CD4-positive, alpha-beta memory T cell (primary cell): ENCODE measurements at regions of chr20 and their contacts with region 1.

Region 1: GRCh38 chr20:32779500-32780211 is 17.5 kb downstream of the DNMT3B start:
- DNase-seq: no peak
- H3K4me3 ChIP-seq: no peak overlapping the region
- H3K4me3 Mint-ChIP-seq: no peak overlapping the region
- H3K27ac ChIP-seq: no peak overlapping the region
- H3K27ac Mint-ChIP-seq: no peak overlapping the region
- H3K4me1 ChIP-seq: no peaks in the 10 kb centered on the region
- H3K4me1 Mint-ChIP-seq: peaks cover 0 to 4% (median 3%) of the 10 kb centered on the region in 4 donors
- H3K27me3 ChIP-seq: no peaks in the 10 kb centered on the region
- H3K27me3 Mint-ChIP-seq: no peaks in the 10 kb centered on the region

Region 2: DNA sequence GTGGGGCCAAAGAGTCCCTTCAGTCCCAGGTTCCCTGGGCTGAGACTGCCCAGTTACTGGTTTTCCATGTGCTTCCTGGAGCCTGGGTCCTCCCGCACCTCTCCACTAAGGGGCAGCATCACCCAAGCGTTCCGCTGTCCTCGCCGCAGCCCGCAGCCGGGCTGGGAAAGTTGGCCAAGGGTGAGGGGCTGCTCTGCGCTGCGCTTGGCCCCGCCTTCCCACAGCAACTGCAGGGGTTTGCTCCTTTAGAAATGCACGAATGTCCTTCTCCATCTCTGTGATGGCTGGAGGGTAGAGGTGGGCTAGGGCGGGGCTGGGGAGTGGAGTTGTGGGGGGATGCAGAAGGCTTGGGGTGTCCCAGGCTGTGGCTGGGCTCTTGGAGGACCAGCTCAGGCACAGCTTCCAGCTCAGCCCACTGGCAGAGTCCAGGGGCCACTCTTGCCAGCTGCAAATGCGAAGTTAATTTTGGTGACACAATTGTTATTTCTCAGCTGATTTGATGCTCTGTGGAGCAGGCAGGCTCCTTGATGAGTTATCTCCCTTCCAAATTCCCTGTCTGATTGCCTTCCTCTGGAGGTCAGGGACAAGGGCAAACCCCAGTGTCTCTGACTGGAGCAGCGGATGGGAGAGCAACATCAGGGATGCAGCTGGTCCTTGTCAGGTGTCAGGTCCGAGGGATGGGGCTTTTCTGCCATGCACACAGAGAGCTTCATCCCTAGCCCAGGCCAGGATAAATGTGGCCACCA is 257.7 kb before region 1 on chr20:
- CTCF ChIA-PET with region 1: interaction called, 10 read pairs
- POLR2A ChIA-PET with region 1: no interaction called
- intact Hi-C with region 1: no loop called
- DNase-seq: peak; percentile 62 to 72 (median 70)
- H3K4me3 ChIP-seq: no peak overlapping the region
- H3K4me3 Mint-ChIP-seq: peak overlapping the region in 6 of 8 donors; percentile 21 to 76 (median 56)
- H3K27ac ChIP-seq: peak overlapping the region; percentile 38
- H3K27ac Mint-ChIP-seq: peak overlapping the region; percentile 68 to 90 (median 88)
- H3K4me1 ChIP-seq: peaks cover 59% of the 10 kb centered on the region
- H3K4me1 Mint-ChIP-seq: peaks cover 37 to 66% (median 56%) of the 10 kb centered on the region in 4 donors
- H3K27me3 ChIP-seq: no peaks in the 10 kb centered on the region
- H3K27me3 Mint-ChIP-seq: no peaks in the 10 kb centered on the region

Region 3: DNA sequence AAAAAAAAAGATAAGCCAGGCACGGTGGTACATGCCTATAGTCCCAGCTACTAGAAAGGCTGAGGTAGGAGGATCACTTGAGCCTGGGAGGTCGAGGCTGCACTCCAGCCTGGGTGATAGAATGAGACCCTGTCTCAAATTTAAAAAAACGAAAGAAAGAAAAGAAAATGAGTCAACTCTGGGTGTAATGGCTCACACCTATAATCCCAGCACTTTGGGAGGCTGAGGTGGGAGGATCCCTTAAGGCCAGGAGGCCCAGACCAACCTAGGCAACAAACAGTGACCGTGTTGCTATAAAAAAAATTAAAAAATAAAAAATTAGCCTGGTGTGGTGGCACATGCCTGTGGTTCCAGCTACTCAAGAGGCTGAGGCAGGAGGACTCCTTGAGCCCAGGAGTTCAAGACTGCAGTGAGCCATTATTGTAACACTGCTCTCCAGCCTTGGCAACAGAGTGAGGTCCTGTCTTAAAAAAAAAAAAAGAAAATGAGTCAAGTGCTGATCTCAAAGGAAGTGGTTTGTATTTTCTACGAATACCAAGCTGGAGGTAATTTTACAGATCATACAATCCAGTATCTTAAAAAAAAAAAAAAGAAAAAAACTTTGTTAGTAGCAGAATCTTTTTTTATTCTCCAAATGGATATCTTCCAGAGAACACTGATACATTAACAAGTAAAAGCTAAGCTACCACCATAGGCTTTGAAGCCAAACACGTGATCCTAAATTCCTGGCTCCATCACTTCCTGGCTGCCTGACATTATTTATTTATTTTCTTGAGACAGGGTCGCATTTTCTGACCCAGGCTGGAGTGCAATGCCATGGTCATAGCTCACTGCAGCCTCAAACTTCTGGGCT is 42.1 kb before region 1 on chr20:
- CTCF ChIA-PET with region 1: interaction called, 38 read pairs
- POLR2A ChIA-PET with region 1: interaction called, 3 read pairs
- intact Hi-C with region 1: loop called (anchors 5 kb)
- DNase-seq: peak; percentile 59 to 78 (median 67)
- H3K4me3 ChIP-seq: peak overlapping the region in 1 of 2 donors; percentile 19
- H3K4me3 Mint-ChIP-seq: peak overlapping the region; percentile 31 to 76 (median 66)
- H3K27ac ChIP-seq: peak overlapping the region; percentile 41
- H3K27ac Mint-ChIP-seq: peak overlapping the region; percentile 92 to 96 (median 93)
- H3K4me1 ChIP-seq: peaks cover 57% of the 10 kb centered on the region
- H3K4me1 Mint-ChIP-seq: peaks cover 22 to 62% (median 43%) of the 10 kb centered on the region in 4 donors
- H3K27me3 ChIP-seq: no peaks in the 10 kb centered on the region
- H3K27me3 Mint-ChIP-seq: no peaks in the 10 kb centered on the region

Region 4: GRCh38 chr20:32756156-32756555 is 23.5 kb before region 1 on chr20:
- CTCF ChIA-PET with region 1: interaction called, 10 read pairs
- POLR2A ChIA-PET with region 1: no interaction called
- intact Hi-C with region 1: no loop called
- DNase-seq: no peak
- H3K4me3 ChIP-seq: no peak overlapping the region
- H3K4me3 Mint-ChIP-seq: no peak overlapping the region
- H3K27ac ChIP-seq: no peak overlapping the region
- H3K27ac Mint-ChIP-seq: no peak overlapping the region
- H3K4me1 ChIP-seq: peaks cover 2% of the 10 kb centered on the region
- H3K4me1 Mint-ChIP-seq: peaks cover 1 to 4% (median 2%) of the 10 kb centered on the region in 4 donors
- H3K27me3 ChIP-seq: no peaks in the 10 kb centered on the region
- H3K27me3 Mint-ChIP-seq: no peaks in the 10 kb centered on the region

Region 5: DNA sequence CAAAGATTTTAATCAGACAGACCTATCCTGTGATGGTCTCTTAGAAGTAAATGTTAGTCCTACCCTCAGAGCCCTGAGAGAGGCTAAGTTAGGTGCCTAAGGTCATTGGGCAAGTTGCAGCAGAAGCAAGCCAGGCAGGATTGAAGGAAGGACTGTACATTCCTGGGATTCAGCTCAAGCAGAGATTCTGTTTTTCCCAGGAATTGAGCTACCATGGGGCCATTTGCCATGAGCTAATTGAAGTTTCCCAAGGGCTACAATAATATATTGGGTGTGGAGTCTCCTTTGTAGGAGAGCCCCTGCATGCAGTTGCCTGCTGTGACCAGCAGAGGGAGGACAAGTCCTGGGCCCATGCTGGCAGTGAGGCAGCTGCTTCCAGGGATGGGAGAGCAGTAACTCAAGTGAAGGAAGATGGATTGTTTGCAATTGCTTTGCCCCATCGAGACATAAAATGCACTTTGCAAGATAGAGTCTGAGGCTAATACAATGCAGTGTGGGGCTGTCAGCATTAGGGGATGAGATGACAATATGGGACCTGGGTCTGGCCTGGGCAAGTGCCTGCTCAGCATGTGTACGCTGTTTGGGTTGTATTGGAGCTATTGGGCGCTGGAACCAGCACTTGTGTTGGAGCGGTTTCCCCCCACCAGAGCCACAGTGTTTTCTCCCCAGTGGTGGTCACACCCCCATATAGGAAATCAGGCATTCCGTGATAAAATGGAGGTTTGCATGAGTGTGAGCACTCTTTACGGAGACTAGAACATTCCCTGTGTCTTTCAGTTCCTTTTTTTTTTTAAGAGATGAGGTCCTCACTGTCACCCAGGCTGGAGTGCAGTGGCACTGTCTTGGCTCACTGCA is 10.5 kb after region 1 on chr20:
- CTCF ChIA-PET with region 1: interaction called, 13 read pairs
- POLR2A ChIA-PET with region 1: no interaction called
- intact Hi-C with region 1: no loop called
- DNase-seq: peak; percentile 66 to 73 (median 67)
- H3K4me3 ChIP-seq: no peak overlapping the region
- H3K4me3 Mint-ChIP-seq: peak overlapping the region in 1 of 8 donors; percentile 9
- H3K27ac ChIP-seq: no peak overlapping the region
- H3K27ac Mint-ChIP-seq: peak overlapping the region in 6 of 7 donors; percentile 16 to 88 (median 70)
- H3K4me1 ChIP-seq: peaks cover 41% of the 10 kb centered on the region
- H3K4me1 Mint-ChIP-seq: peaks cover 23 to 44% (median 31%) of the 10 kb centered on the region in 4 donors
- H3K27me3 ChIP-seq: no peaks in the 10 kb centered on the region
- H3K27me3 Mint-ChIP-seq: no peaks in the 10 kb centered on the region

Region 6: GRCh38 chr20:32810941-32811340 is 31.3 kb after region 1 on chr20:
- CTCF ChIA-PET with region 1: no interaction called
- POLR2A ChIA-PET with region 1: no interaction called
- intact Hi-C with region 1: no loop called
- DNase-seq: no peak
- H3K4me3 ChIP-seq: no peak overlapping the region
- H3K4me3 Mint-ChIP-seq: no peak overlapping the region
- H3K27ac ChIP-seq: no peak overlapping the region
- H3K27ac Mint-ChIP-seq: peak overlapping the region in 2 of 7 donors; percentile 29 to 58
- H3K4me1 ChIP-seq: no peaks in the 10 kb centered on the region
- H3K4me1 Mint-ChIP-seq: no peaks in the 10 kb centered on the region
- H3K27me3 ChIP-seq: no peaks in the 10 kb centered on the region
- H3K27me3 Mint-ChIP-seq: no peaks in the 10 kb centered on the region

Region 7: GRCh38 chr20:32837157-32837556 is 57.5 kb after region 1 on chr20:
- CTCF ChIA-PET with region 1: no interaction called
- POLR2A ChIA-PET with region 1: no interaction called
- intact Hi-C with region 1: no loop called
- DNase-seq: no peak
- H3K4me3 ChIP-seq: no peak overlapping the region
- H3K4me3 Mint-ChIP-seq: no peak overlapping the region
- H3K27ac ChIP-seq: no peak overlapping the region
- H3K27ac Mint-ChIP-seq: peak overlapping the region in 5 of 7 donors; percentile 6 to 53 (median 41)
- H3K4me1 ChIP-seq: peaks cover 29% of the 10 kb centered on the region
- H3K4me1 Mint-ChIP-seq: peaks cover 29 to 62% (median 46%) of the 10 kb centered on the region in 4 donors
- H3K27me3 ChIP-seq: no peaks in the 10 kb centered on the region
- H3K27me3 Mint-ChIP-seq: no peaks in the 10 kb centered on the region

Region 8: DNA sequence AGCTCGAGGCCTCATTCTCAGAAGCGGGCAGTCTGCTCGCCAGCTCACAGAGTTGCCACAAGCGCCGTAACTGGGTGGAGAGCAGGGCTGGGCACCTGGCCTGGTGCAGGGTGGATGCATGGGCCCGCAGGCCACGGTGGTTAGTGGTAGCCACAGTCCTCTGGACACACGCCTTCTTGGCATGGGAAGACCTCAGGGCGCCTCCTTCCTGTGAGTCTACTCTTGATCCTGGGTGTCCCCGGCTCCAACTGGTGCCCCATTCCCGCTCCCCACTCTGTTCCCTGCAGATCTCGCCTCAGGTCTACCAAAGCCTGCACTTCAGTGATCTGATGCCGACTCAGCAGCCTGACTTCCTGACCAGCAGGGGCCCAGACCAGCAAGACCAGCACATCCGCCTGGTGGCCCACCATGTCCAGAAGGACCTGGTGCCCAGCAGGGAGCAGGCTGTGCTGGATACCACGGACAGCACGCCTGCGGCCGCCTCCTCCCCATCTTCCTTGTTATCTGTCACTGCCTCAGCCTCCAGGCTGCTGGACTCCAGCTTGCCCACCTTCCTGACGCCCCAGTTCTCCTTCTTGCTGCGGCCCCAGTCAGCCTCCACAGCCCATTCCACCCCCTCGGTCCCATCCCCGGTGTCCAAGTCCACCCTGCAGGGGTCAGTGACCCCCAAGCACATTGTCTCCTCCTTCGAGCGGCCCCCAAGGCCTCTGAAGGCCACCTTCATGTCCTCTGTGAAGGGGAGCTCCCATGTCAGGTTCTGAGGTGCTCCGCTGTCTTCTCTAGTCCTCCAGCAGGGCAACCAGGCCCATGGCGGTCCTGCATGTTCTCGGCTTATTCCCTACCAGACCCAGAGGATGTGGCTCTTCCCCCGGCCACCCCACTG is 181.4 kb after region 1 on chr20:
- CTCF ChIA-PET with region 1: no interaction called
- POLR2A ChIA-PET with region 1: no interaction called
- intact Hi-C with region 1: no loop called
- DNase-seq: no peak
- H3K4me3 ChIP-seq: no peak overlapping the region
- H3K4me3 Mint-ChIP-seq: no peak overlapping the region
- H3K27ac ChIP-seq: no peak overlapping the region
- H3K27ac Mint-ChIP-seq: peak overlapping the region in 3 of 7 donors; percentile 28 to 87 (median 46)
- H3K4me1 ChIP-seq: peaks cover 21% of the 10 kb centered on the region
- H3K4me1 Mint-ChIP-seq: peaks cover 15 to 32% (median 17%) of the 10 kb centered on the region in 4 donors
- H3K27me3 ChIP-seq: no peaks in the 10 kb centered on the region
- H3K27me3 Mint-ChIP-seq: no peaks in the 10 kb centered on the region

Region 9: GRCh38 chr20:34600892-34601653 is 1821.4 kb after region 1 on chr20:
- CTCF ChIA-PET with region 1: no interaction called
- POLR2A ChIA-PET with region 1: no interaction called
- intact Hi-C with region 1: no loop called
- DNase-seq: no peak
- H3K4me3 ChIP-seq: no peak overlapping the region
- H3K4me3 Mint-ChIP-seq: no peak overlapping the region
- H3K27ac ChIP-seq: no peak overlapping the region
- H3K27ac Mint-ChIP-seq: no peak overlapping the region
- H3K4me1 ChIP-seq: no peaks in the 10 kb centered on the region
- H3K4me1 Mint-ChIP-seq: no peaks in the 10 kb centered on the region
- H3K27me3 ChIP-seq: no peaks in the 10 kb centered on the region
- H3K27me3 Mint-ChIP-seq: no peaks in the 10 kb centered on the region